Uterus (tissue), 4 donors: ENCODE measurements at regions of chr20 and their contacts with region 1.

Region 1: DNA sequence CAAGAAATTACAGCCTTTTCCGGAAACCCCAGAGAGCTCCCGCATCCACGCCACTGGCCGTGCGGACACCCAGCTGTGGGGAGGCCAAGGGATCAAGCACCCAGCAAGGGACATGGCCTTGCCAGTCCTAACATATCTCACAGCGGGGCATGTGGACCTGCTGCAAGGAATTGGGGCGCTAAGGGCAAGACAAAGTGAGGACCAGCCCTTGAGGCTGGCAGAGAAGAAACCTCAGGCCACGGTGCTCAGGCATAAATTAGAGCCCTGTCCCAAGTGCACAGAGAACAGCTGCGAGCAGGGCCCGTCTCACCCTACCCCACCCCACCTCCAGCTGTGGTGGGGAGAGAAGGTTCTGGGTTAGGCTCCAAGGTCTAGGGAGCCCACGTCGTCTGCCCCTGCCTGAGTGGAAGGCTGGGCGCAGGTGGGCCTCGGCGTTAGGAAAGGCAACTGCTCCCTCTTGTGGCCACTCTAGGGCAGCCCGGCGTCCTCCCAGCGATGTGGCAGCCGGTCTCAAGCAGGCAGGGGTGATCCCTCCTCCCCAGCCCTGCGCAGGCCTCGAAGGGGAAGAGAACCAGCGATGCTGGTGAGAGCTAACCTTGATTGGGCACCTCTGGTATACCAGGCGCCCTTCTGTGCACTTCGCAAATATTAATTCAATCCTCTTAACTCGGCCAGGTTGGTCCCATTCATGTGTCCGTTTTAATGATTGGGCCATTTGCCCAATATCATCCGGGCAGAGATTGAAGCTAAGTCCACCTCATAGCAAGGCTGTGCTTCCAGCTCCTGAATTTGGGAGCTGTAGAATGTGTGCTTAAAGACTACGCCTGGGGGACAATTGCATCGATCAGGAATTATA is 235.8 kb downstream of the NFATC2 start:
- DNase-seq: peak; percentile 69 to 73
- H3K4me3 ChIP-seq: no peak overlapping the region
- H3K27ac ChIP-seq: no peak overlapping the region
- H3K4me1 ChIP-seq: no peaks in the 10 kb centered on the region
- H3K27me3 ChIP-seq: no peaks in the 10 kb centered on the region
- CTCF ChIP-seq: peak; percentile 84 to 89 (median 86)
- POLR2A ChIP-seq: no peak

Region 2: DNA sequence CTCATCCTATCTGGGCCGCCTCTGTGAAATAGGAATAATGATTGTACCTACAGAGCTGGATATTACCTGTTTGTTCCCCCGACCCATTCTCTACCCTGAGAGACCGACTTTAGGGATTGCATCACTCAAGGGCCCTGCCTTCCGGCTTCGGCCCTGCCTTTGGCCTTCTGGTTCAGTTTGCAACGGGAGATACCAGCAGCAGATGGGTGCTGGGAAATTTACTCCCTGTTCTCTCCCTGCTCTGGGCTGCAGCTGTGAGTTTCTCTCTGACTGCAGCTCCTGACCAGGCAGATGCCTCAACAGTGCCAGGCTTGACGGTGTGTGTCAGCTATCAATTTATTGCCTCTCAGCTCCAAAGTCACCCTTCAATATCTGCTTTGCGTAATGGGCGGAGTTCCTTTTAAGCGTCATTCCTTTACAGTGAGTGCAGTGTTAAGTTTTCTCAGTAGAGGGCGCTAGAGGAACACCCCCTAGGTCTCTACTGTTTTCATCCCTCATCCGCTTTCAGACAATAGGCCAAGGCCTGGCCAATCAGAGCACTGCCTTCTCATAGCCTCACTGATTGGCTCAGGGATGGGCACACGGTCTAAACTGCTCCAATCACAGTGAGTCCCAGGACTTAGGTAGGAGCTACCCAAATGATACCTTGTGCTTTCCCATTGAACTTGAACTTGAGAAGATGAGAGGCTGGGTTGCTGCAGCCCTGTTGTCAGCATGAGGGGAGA is 313.8 kb before region 1 on chr20:
- intact Hi-C with region 1: loop called (anchors 5 kb)
- DNase-seq: no peak
- H3K4me3 ChIP-seq: no peak overlapping the region
- H3K27ac ChIP-seq: no peak overlapping the region
- H3K4me1 ChIP-seq: no peaks in the 10 kb centered on the region
- H3K27me3 ChIP-seq: no peaks in the 10 kb centered on the region
- CTCF ChIP-seq: peak in 3 of 4 experiments; percentile 10 to 23 (median 17)
- POLR2A ChIP-seq: no peak